Transverse colon (tissue), 4 donors: ENCODE measurements at regions of chr3 and their contacts with region 1.

Region 1: GRCh38 chr3:85821130-85821756 is 862.5 kb downstream of the CADM2 start:
- DNase-seq: peak; percentile 17
- H3K4me3 ChIP-seq: no peak overlapping the region
- H3K27ac ChIP-seq: no peak overlapping the region
- H3K4me1 ChIP-seq: no peaks in the 10 kb centered on the region
- H3K27me3 ChIP-seq: no peaks in the 10 kb centered on the region
- CTCF ChIP-seq: peak; percentile 25 to 51 (median 39)
- EP300 ChIP-seq: no peak
- POLR2A ChIP-seq: no peak

Region 2: DNA sequence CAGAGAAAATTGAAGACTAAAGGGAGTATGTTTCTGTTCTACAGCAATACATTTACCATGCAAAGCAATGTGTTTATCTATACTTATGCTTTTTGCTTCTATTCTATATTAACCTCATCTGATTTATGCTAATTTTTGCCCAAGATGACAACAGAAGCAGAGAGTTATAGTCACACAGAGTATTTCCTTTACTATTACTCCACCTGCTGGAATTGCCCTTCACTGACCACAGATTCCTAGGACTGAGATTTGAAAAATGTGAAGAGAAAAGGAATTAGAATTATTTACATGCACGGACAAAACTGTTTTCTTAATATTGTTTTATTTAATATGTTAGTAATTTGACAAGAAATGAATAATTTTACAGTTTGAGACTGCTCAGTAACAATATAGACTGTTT is 424.1 kb after region 1 on chr3:
- in situ Hi-C with region 1: loop called in 1 of 4 experiments (anchors 25 kb)
- intact Hi-C with region 1: no loop called
- DNase-seq: no peak
- H3K4me3 ChIP-seq: no peak overlapping the region
- H3K27ac ChIP-seq: no peak overlapping the region
- H3K4me1 ChIP-seq: peaks cover 0 to 2% (median 0%) of the 10 kb centered on the region in 4 donors
- H3K27me3 ChIP-seq: no peaks in the 10 kb centered on the region
- CTCF ChIP-seq: peak in 4 of 5 experiments; percentile 31 to 47 (median 44)
- EP300 ChIP-seq: no peak
- POLR2A ChIP-seq: no peak